ENCODE measurements at regions of chr20 and their contacts with region 1.

Region 1: DNA sequence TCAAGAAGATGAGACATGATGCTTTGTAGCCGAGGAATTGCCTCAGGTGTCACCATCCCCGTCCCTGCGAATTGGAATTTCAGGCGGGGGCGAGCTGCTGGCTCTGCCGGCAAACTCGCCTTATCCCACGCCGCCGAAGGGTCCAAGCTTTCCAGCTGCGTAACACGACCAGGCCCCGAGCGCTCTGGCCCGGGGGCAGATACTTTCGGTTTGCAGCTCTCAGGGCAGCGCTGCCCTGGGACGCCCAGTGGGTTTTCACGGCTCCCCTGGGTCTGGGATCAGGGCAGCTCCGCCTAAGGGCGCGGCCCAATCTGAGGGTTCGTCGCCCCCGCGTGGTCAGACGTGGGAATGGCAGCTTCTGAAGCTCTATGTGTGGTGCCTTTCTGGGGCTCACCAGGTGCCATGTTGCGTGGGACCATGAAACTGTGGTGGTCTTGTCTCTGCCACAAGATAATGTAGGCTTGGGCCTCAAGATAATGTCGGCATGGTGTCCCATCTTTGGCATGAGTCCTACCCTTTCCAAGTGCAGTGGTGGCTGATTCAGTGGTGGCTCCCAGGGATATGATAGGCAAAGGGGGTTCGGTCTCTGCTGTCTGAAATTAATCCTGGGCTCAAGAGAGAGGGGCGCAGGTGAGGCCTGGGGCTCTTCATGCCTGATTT is 20.9 kb downstream of the PIGT start:
- DNase-seq: peak; percentile 89
- ATAC-seq: peak; percentile 93
- H3K4me3 ChIP-seq: peak overlapping the region; percentile 32 to 81 (median 57)
- H3K4me3 Mint-ChIP-seq: peak overlapping the region; percentile 90
- H3K27ac ChIP-seq: peak overlapping the region in 1 of 2 donors; percentile 53
- H3K27ac Mint-ChIP-seq: peak overlapping the region; percentile 86
- H3K4me1 ChIP-seq: peaks cover 30 to 33% of the 10 kb centered on the region in 2 donors
- H3K4me1 Mint-ChIP-seq: peaks cover 32% of the 10 kb centered on the region
- H3K27me3 ChIP-seq: no peaks in the 10 kb centered on the region
- H3K27me3 Mint-ChIP-seq: no peaks in the 10 kb centered on the region
- CTCF ChIP-seq: peak; percentile 93

Region 2: GRCh38 chr20:44683263-44684046 is 753.4 kb before region 1 on chr20:
- CTCF ChIA-PET with region 1: no interaction called
- POLR2A ChIA-PET with region 1: no interaction called
- intact Hi-C with region 1: no loop called
- DNase-seq: peak; percentile 71
- ATAC-seq: peak; percentile 47
- H3K4me3 ChIP-seq: no peak overlapping the region
- H3K4me3 Mint-ChIP-seq: no peak overlapping the region
- H3K27ac ChIP-seq: no peak overlapping the region
- H3K27ac Mint-ChIP-seq: no peak overlapping the region
- H3K4me1 ChIP-seq: peaks cover 0 to 11% of the 10 kb centered on the region in 2 donors
- H3K4me1 Mint-ChIP-seq: peaks cover 5% of the 10 kb centered on the region
- H3K27me3 ChIP-seq: peaks cover 0 to 3% (median 0%) of the 10 kb centered on the region in 4 experiments
- H3K27me3 Mint-ChIP-seq: peaks cover 10% of the 10 kb centered on the region
- CTCF ChIP-seq: peak; percentile 38

Region 3: DNA sequence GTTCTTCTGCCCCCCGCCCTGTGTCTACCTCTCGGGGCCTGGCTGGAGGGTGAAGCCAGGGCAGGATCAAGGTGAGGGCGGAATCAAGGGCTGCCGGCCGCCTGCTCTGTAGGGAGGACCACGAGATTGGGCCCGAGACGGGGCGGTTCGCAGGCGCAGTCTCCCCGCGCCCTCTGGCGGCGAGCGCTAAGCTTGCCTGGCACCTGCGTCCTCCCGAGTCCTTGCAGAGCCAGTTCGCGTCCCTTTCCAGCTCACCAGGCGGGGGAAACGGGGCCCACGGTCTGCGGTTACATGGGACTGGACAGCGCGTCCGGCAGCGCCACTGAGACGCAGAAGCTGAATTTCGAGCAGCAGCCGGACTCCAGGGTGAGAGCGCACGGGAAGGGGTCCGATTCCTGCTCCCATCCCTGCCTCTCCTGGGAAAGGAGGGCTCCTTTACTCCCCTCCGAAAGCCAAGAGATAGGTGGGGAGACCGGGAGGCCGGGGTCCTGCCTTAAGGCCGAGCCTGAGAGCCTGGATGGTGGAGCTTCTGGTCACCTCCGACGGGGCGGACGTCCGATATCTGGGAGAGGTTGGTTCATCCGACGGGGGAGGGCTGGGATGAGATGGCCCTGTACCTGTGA is 125.2 kb before region 1 on chr20:
- CTCF ChIA-PET with region 1: interaction called, 13 read pairs
- POLR2A ChIA-PET with region 1: no interaction called
- intact Hi-C with region 1: no loop called
- DNase-seq: peak; percentile 77
- ATAC-seq: peak; percentile 64
- H3K4me3 ChIP-seq: no peak overlapping the region
- H3K4me3 Mint-ChIP-seq: no peak overlapping the region
- H3K27ac ChIP-seq: no peak overlapping the region
- H3K27ac Mint-ChIP-seq: no peak overlapping the region
- H3K4me1 ChIP-seq: peaks cover 15 to 16% of the 10 kb centered on the region in 2 donors
- H3K4me1 Mint-ChIP-seq: peaks cover 7% of the 10 kb centered on the region
- H3K27me3 ChIP-seq: peaks cover 0 to 67% (median 18%) of the 10 kb centered on the region in 4 experiments
- H3K27me3 Mint-ChIP-seq: peaks cover 59% of the 10 kb centered on the region
- CTCF ChIP-seq: peak; percentile 82

Region 4: GRCh38 chr20:45350217-45350616 is 86.6 kb before region 1 on chr20:
- CTCF ChIA-PET with region 1: interaction called, 13 read pairs
- POLR2A ChIA-PET with region 1: no interaction called
- intact Hi-C with region 1: no loop called
- DNase-seq: no peak
- ATAC-seq: no peak
- H3K4me3 ChIP-seq: no peak overlapping the region
- H3K4me3 Mint-ChIP-seq: no peak overlapping the region
- H3K27ac ChIP-seq: no peak overlapping the region
- H3K27ac Mint-ChIP-seq: no peak overlapping the region
- H3K4me1 ChIP-seq: peaks cover 21 to 23% of the 10 kb centered on the region in 2 donors
- H3K4me1 Mint-ChIP-seq: peaks cover 10% of the 10 kb centered on the region
- H3K27me3 ChIP-seq: peaks cover 0 to 30% (median 6%) of the 10 kb centered on the region in 4 experiments
- H3K27me3 Mint-ChIP-seq: peaks cover 16% of the 10 kb centered on the region
- CTCF ChIP-seq: no peak

Region 5: GRCh38 chr20:45373353-45374100 is 63.3 kb before region 1 on chr20:
- CTCF ChIA-PET with region 1: interaction called, 814 read pairs
- POLR2A ChIA-PET with region 1: interaction called, 34 read pairs
- intact Hi-C with region 1: loop called (anchors 1 kb)
- DNase-seq: peak; percentile 88
- ATAC-seq: peak; percentile 92
- H3K4me3 ChIP-seq: peak overlapping the region; percentile 42 to 64 (median 54)
- H3K4me3 Mint-ChIP-seq: peak overlapping the region; percentile 96
- H3K27ac ChIP-seq: peak overlapping the region in 1 of 2 donors; percentile 73
- H3K27ac Mint-ChIP-seq: peak overlapping the region; percentile 86
- H3K4me1 ChIP-seq: peaks cover 48 to 57% of the 10 kb centered on the region in 2 donors
- H3K4me1 Mint-ChIP-seq: peaks cover 56% of the 10 kb centered on the region
- H3K27me3 ChIP-seq: no peaks in the 10 kb centered on the region
- H3K27me3 Mint-ChIP-seq: no peaks in the 10 kb centered on the region
- CTCF ChIP-seq: peak; percentile 90

Region 6: GRCh38 chr20:45415774-45416637 is 20.9 kb before region 1 on chr20 and contains the start of gene PIGT:
- CTCF ChIA-PET with region 1: interaction called, 98 read pairs
- POLR2A ChIA-PET with region 1: interaction called, 7 read pairs
- intact Hi-C with region 1: loop called (anchors 1 kb)
- DNase-seq: peak; percentile 95
- ATAC-seq: peak; percentile 75
- H3K4me3 ChIP-seq: peak within 1 kb of the TSS; percentile 80 to 97 (median 97)
- H3K4me3 Mint-ChIP-seq: peak within 1 kb of the TSS; percentile 99
- H3K27ac ChIP-seq: peak within 1 kb of the TSS; percentile 81 to 90
- H3K27ac Mint-ChIP-seq: peak within 1 kb of the TSS; percentile 100
- H3K4me1 ChIP-seq: peaks cover 30 to 38% of the 10 kb centered on the region in 2 donors
- H3K4me1 Mint-ChIP-seq: peaks cover 53% of the 10 kb centered on the region
- H3K27me3 ChIP-seq: no peaks in the 10 kb centered on the region
- H3K27me3 Mint-ChIP-seq: no peaks in the 10 kb centered on the region
- CTCF ChIP-seq: no peak
- total RNA-seq, gene PIGT: 106 and 110 TPM in 2 replicates

Measured in B cell (primary cell).